Endothelial cell of umbilical vein (primary cell): ENCODE measurements at regions of chr20 and their contacts with region 1.

Region 1: GRCh38 chr20:34876162-34877001 is at the start of gene ACSS2:
- DNase-seq: peak; percentile 99
- H3K4me3 ChIP-seq: peak within 1 kb of the TSS; percentile 72 to 89 (median 89)
- H3K27ac ChIP-seq: peak within 1 kb of the TSS; percentile 6
- H3K4me1 ChIP-seq: peaks cover 12% of the 10 kb centered on the region
- H3K27me3 ChIP-seq: no peaks in the 10 kb centered on the region
- CTCF ChIP-seq: no peak
- POLR2A ChIP-seq: peak; percentile 79
- total RNA-seq, gene ACSS2: 40.7 and 48.5 TPM in 2 replicates

Region 2: DNA sequence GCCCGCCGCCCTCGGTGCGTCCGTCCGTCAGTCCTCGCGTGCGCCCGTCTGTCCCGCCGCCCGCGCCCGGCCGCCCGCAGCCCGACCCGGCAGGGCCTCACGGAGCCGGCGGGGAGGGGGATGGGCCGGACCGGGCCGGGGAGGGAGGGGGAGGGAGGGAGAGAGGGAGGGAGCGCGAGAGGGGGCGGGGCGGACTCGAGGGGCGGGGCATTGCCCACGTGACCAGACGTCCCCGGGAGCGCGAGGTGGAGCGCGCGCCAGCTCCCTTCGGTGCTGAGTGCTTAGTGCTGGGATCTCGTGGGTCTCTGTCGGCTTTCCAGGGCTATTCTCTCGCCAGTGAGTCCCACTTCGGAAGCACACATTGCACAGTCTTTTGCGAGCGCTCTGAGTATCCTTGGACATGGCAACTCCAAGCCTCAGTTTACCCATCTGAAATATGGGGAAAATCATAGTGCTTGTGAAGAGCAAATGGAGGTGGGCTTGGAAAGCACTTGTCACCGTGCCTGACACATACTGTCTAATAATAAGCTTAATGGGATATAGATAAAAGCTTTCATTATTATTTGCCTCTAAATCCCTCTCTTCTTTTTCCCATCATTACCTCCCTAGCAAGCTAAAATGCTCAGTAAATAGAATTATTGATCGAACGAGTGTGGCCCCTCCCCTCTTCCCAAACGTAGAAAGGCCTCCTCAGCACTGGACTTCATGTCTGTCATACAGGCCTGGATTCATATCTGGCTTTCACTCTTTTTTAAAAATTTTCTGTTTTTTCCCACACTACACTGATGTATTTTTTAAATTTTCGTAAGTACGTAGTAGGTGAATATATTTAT is 50.6 kb before region 1 on chr20 and contains the start of gene NCOA6:
- CTCF ChIA-PET with region 1: interaction called, 3 read pairs
- POLR2A ChIA-PET with region 1: no interaction called
- dilution Hi-C with region 1: no loop called
- intact Hi-C with region 1: loop called (anchors 1 kb)
- DNase-seq: peak; percentile 59
- H3K4me3 ChIP-seq: peak within 1 kb of the TSS; percentile 66 to 81 (median 75)
- H3K27ac ChIP-seq: peak within 1 kb of the TSS; percentile 62
- H3K4me1 ChIP-seq: peaks cover 12% of the 10 kb centered on the region
- H3K27me3 ChIP-seq: peaks cover 0 to 6% of the 10 kb centered on the region in 2 experiments
- CTCF ChIP-seq: no peak
- POLR2A ChIP-seq: peak; percentile 35
- total RNA-seq, gene NCOA6: 25.5 and 26.7 TPM in 2 replicates

Region 3: GRCh38 chr20:34907616-34908469 is 31.5 kb after region 1 on chr20:
- CTCF ChIA-PET with region 1: interaction called, 11 read pairs
- POLR2A ChIA-PET with region 1: interaction called, 3 read pairs
- dilution Hi-C with region 1: no loop called
- intact Hi-C with region 1: loop called (anchors 1 kb)
- DNase-seq: peak; percentile 97
- H3K4me3 ChIP-seq: no peak overlapping the region
- H3K27ac ChIP-seq: peak overlapping the region; percentile 66
- H3K4me1 ChIP-seq: peaks cover 37% of the 10 kb centered on the region
- H3K27me3 ChIP-seq: no peaks in the 10 kb centered on the region
- CTCF ChIP-seq: no peak
- POLR2A ChIP-seq: peak; percentile 53

Region 4: DNA sequence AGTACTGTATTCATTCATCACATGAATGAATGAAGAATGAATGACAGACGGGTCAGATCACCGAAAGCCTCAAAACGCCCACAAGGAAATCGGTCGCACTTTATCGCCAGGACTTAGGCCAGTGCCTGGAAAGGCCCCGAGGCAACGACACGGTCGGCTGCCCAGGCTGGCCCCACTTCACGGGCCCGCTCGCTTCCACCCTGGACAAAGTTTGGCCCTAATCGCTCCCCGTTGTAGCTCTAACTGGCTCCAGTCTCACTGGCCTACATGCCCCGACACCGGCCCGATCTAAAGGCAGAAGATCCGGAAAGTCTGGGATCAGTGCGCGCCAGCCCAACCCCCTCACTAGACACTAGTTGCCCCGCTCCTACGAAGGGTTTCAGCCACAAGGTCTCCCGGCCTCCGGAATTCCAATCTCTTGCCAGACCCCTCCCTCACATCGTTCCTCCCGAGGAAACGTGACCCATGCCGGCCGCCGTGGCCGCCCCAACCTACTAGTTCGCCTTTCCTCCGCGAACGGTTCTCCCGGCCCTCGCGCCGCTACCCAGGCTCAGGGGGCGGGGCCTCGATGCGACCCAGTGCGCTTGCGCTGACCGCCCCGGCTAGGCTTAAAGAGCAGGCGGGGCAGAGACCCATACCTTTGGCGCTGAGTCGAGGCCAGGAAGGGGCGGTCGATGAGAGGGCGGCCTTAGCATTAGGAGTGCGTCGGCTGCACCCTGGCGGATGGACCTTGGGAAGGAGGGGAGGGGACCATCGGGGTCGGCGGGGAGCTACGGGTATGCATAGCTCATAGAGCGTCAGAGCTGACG is 79.1 kb after region 1 on chr20 and contains the starts of genes GSS and MYH7B:
- CTCF ChIA-PET with region 1: interaction called, 182 read pairs
- POLR2A ChIA-PET with region 1: interaction called, 15 read pairs
- dilution Hi-C with region 1: no loop called
- intact Hi-C with region 1: loop called (anchors 1 kb)
- DNase-seq: peak; percentile 99
- H3K4me3 ChIP-seq: peak within 1 kb of the TSS; percentile 58 to 84 (median 70)
- H3K27ac ChIP-seq: peak within 1 kb of the TSS; percentile 65
- H3K4me1 ChIP-seq: peaks cover 17% of the 10 kb centered on the region
- H3K27me3 ChIP-seq: no peaks in the 10 kb centered on the region
- CTCF ChIP-seq: peak; percentile 34 to 52
- POLR2A ChIP-seq: peak; percentile 56
- total RNA-seq, gene GSS: 46.9 and 47.9 TPM in 2 replicates
- total RNA-seq, gene MYH7B: 0.07 TPM in 1 of 2 replicates, not detected in the other

Region 5: GRCh38 chr20:35001596-35002362 is 125.4 kb after region 1 on chr20:
- CTCF ChIA-PET with region 1: interaction called, 31 read pairs
- POLR2A ChIA-PET with region 1: interaction called, 3 read pairs
- dilution Hi-C with region 1: no loop called
- intact Hi-C with region 1: loop called (anchors 1 kb)
- DNase-seq: no peak
- H3K4me3 ChIP-seq: no peak overlapping the region
- H3K27ac ChIP-seq: no peak overlapping the region
- H3K4me1 ChIP-seq: no peaks in the 10 kb centered on the region
- H3K27me3 ChIP-seq: no peaks in the 10 kb centered on the region
- CTCF ChIP-seq: peak; percentile 18 to 30
- POLR2A ChIP-seq: no peak

Region 6: GRCh38 chr20:35135867-35136586 is 259.6 kb after region 1 on chr20:
- CTCF ChIA-PET with region 1: no interaction called
- POLR2A ChIA-PET with region 1: no interaction called
- dilution Hi-C with region 1: no loop called
- intact Hi-C with region 1: loop called (anchors 1 kb)
- DNase-seq: peak; percentile 88
- H3K4me3 ChIP-seq: no peak overlapping the region
- H3K27ac ChIP-seq: peak overlapping the region; percentile 97
- H3K4me1 ChIP-seq: peaks cover 34% of the 10 kb centered on the region
- H3K27me3 ChIP-seq: no peaks in the 10 kb centered on the region
- CTCF ChIP-seq: no peak
- POLR2A ChIP-seq: peak; percentile 33

Region 7: DNA sequence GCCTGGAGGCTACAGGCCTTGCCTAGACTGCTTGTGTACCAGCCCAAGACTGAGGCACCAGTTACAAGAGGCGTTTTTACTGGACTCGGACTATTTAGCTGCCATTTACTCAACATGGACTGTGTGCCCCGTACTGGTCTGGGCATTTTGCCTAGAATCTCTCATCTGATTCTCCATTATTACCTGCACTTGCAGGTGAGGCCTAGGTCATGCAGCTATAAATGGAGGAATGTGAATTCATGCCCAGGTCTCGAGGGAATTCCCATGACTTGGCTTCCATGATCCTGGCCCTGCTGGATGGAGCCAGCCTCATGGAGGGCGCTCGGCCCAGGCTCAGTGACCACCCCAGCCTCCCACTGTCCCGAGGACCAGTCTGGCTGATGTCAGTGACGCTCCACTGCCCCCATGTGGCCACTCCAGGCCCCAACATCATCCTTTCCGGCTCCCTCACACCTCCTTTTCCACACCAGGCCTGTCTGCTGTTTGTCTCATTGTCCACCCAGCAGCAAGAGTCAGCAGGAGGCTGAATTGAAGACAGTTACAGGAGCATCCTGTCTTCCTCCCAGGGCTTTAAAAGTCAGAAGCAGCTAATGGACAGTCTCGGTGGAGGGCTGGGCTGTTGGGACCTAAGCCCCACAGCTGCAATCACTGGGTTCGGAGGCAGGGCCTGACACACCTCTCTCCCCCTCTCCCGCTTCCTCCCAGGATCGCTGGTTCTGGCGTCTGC is 392.8 kb after region 1 on chr20:
- CTCF ChIA-PET with region 1: interaction called, 5 read pairs
- POLR2A ChIA-PET with region 1: no interaction called
- dilution Hi-C with region 1: no loop called
- intact Hi-C with region 1: loop called (anchors 1 kb)
- DNase-seq: peak; percentile 66
- H3K4me3 ChIP-seq: no peak overlapping the region
- H3K27ac ChIP-seq: no peak overlapping the region
- H3K4me1 ChIP-seq: no peaks in the 10 kb centered on the region
- H3K27me3 ChIP-seq: no peaks in the 10 kb centered on the region
- CTCF ChIP-seq: peak; percentile 87 to 95
- POLR2A ChIP-seq: no peak